Ovary (tissue), 10 donors: ENCODE measurements at regions of chr17 and their contacts with region 1.

Region 1: GRCh38 chr17:33531311-33531710 is 238.2 kb upstream of the ASIC2 start:
- DNase-seq: no peak
- H3K4me3 ChIP-seq: no peak overlapping the region
- H3K27ac ChIP-seq: no peak overlapping the region
- H3K4me1 ChIP-seq: no peaks in the 10 kb centered on the region
- H3K27me3 ChIP-seq: no peaks in the 10 kb centered on the region
- CTCF ChIP-seq: no peak
- EP300 ChIP-seq: no peak
- POLR2A ChIP-seq: no peak

Region 2: DNA sequence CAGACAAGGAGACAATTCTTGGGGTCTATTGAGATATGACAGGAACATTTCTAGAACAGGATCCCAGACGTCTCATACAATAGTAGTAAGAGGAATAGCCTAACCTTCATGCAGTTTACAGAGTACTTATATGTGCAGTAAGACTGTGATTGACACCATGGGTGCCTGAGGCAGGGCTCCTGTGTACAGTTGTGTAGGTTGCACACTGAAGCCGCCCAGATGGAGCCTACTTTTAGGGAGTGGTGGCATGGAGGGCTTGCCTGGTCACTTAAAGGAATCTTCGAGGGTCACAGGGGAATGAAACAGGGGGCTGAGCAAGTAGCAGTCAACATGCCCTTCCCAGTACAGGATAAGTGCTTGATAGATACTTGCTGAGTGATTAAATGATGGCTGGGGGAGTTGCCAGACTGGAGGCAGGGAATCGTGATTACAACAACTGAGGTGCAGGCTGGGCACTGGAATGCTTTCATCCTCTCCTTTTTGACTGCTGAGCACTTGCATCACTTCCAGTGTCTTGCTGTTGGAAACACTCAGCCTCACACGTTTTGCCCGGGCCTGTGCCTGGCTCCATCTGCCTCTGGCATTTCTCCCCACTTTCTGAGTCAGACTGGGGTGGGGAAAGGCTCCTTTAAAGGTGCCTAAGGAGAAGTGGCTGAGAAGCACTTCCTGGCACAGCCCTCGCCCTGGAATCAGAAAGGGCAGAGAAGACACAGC is 1743.3 kb before region 1 on chr17:
- intact Hi-C with region 1: loop called in 1 of 4 experiments (anchors 10 kb)
- DNase-seq: peak in 1 of 5 donors; percentile 17
- H3K4me3 ChIP-seq: no peak overlapping the region
- H3K27ac ChIP-seq: no peak overlapping the region
- H3K4me1 ChIP-seq: no peaks in the 10 kb centered on the region
- H3K27me3 ChIP-seq: no peaks in the 10 kb centered on the region
- CTCF ChIP-seq: no peak
- EP300 ChIP-seq: no peak
- POLR2A ChIP-seq: no peak